ENCODE measurements at regions of chr17 and their contacts with region 1.

Region 1: GRCh38 chr17:29617125-29617480 is 5.6 kb downstream of the CORO6 start:
- DNase-seq: peak; percentile 90
- ATAC-seq: peak; percentile 71
- H3K4me3 ChIP-seq: peak overlapping the region in 4 of 5 experiments; percentile 37 to 73 (median 53)
- H3K4me3 Mint-ChIP-seq: peak overlapping the region; percentile 90
- H3K27ac ChIP-seq: no peak overlapping the region
- H3K27ac Mint-ChIP-seq: peak overlapping the region; percentile 64
- H3K4me1 ChIP-seq: peaks cover 56 to 61% of the 10 kb centered on the region in 2 donors
- H3K4me1 Mint-ChIP-seq: peaks cover 47% of the 10 kb centered on the region
- H3K27me3 ChIP-seq: peaks cover 0 to 40% (median 12%) of the 10 kb centered on the region in 4 experiments
- H3K27me3 Mint-ChIP-seq: peaks cover 5% of the 10 kb centered on the region
- CTCF ChIP-seq: peak; percentile 76

Region 2: GRCh38 chr17:29252101-29252866 is 364.8 kb before region 1 on chr17:
- CTCF ChIA-PET with region 1: no interaction called
- POLR2A ChIA-PET with region 1: no interaction called
- intact Hi-C with region 1: no loop called
- DNase-seq: peak; percentile 39
- ATAC-seq: no peak
- H3K4me3 ChIP-seq: no peak overlapping the region
- H3K4me3 Mint-ChIP-seq: no peak overlapping the region
- H3K27ac ChIP-seq: no peak overlapping the region
- H3K27ac Mint-ChIP-seq: no peak overlapping the region
- H3K4me1 ChIP-seq: peaks cover 0 to 11% of the 10 kb centered on the region in 2 donors
- H3K4me1 Mint-ChIP-seq: peaks cover 16% of the 10 kb centered on the region
- H3K27me3 ChIP-seq: no peaks in the 10 kb centered on the region
- H3K27me3 Mint-ChIP-seq: no peaks in the 10 kb centered on the region
- CTCF ChIP-seq: peak; percentile 66

Region 3: DNA sequence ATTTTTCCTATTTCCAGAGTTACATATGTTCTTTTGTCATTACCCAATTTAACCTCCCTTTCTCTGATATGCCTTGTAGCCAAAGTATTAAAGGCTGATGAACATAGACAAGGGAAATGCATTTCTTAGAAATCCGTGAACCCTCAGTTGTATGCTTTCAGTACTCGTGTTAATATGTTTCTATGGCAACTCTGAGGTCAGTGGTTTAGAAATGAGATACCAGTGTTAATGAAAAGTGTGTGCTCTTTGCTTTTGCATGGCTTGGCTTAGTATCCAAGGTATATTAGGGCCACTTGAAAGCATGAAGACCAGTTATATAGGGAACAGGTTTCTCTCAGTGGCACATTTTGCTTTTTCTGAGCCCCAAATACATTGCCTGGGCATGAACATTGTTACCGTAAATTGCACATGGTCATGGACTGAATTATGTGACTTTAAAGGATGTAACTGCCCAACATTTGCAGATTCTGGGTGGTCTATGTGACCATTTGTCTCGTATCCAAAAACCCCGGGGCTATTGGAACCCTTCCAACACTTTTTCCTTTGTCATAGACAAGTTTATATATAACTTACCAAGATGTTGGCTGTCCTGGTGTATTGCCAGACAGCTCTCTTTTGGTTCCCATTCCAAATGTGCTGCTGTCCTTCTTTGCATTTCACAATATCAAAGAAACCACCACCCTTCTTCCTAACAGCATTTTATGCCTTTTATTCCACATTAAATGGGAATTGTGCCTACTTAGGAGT is 67.8 kb before region 1 on chr17:
- CTCF ChIA-PET with region 1: no interaction called
- POLR2A ChIA-PET with region 1: no interaction called
- intact Hi-C with region 1: no loop called
- DNase-seq: no peak
- ATAC-seq: no peak
- H3K4me3 ChIP-seq: no peak overlapping the region
- H3K4me3 Mint-ChIP-seq: no peak overlapping the region
- H3K27ac ChIP-seq: no peak overlapping the region
- H3K27ac Mint-ChIP-seq: no peak overlapping the region
- H3K4me1 ChIP-seq: no peaks in the 10 kb centered on the region
- H3K4me1 Mint-ChIP-seq: no peaks in the 10 kb centered on the region
- H3K27me3 ChIP-seq: no peaks in the 10 kb centered on the region
- H3K27me3 Mint-ChIP-seq: no peaks in the 10 kb centered on the region
- CTCF ChIP-seq: no peak

Region 4: DNA sequence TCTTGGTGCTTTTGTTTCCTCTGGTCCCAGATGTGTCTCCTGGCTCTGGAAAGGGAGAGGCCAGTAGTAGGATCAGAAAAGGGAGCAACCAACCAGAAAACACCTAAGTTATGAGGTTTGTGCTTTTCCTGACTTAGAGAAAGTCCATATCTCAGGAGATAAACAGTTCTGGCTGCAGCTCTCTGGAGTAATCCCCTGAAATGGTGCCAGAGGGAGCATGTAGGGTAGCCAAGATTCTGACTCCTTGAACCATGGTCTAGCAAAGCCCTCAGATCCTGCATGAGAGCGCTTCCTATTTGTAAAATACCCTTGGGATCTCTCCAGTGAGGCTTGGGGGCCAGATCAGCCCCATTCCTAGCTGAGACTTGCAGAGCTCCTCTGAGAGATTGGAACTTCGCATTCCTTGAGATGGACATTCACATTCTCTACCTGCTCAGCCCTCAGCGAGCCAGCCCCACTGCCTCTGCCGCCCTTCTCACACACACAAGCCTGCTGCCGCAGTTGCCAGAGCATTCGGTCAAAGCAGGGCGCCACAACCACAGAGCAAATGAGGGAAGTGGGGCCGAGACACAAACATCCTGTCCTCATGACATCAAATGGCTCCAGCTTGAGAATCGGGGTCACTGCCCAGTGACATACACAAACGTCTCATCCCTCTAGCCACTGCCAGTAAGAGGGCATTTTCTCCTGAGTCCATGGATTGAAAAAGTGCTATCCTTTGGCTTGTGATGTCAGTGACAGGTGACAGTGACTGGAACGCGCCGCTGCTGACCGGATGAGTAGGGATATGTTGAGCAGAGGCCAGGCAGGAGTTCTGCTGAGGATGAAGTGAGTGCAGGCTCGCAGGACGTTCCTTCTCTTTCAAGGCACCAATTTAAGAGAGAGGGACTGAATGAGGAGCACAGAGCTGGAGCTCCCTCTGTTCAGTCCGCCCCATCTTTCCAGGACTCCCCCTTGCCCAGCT is 55.3 kb before region 1 on chr17:
- CTCF ChIA-PET with region 1: interaction called, 336 read pairs
- POLR2A ChIA-PET with region 1: interaction called, 3 read pairs
- intact Hi-C with region 1: no loop called
- DNase-seq: peak; percentile 71
- ATAC-seq: peak; percentile 36
- H3K4me3 ChIP-seq: peak overlapping the region in 1 of 5 experiments; percentile 47
- H3K4me3 Mint-ChIP-seq: peak overlapping the region; percentile 87
- H3K27ac ChIP-seq: peak overlapping the region; percentile 60 to 74
- H3K27ac Mint-ChIP-seq: peak overlapping the region; percentile 97
- H3K4me1 ChIP-seq: peaks cover 82 to 93% of the 10 kb centered on the region in 2 donors
- H3K4me1 Mint-ChIP-seq: peaks cover 77% of the 10 kb centered on the region
- H3K27me3 ChIP-seq: no peaks in the 10 kb centered on the region
- H3K27me3 Mint-ChIP-seq: no peaks in the 10 kb centered on the region
- CTCF ChIP-seq: no peak

Region 5: GRCh38 chr17:29579866-29580771 is 37.0 kb before region 1 on chr17:
- CTCF ChIA-PET with region 1: interaction called, 336 read pairs
- POLR2A ChIA-PET with region 1: interaction called, 9 read pairs
- intact Hi-C with region 1: loop called (anchors 1 kb)
- DNase-seq: peak; percentile 93
- ATAC-seq: peak; percentile 96
- H3K4me3 ChIP-seq: no peak overlapping the region
- H3K4me3 Mint-ChIP-seq: no peak overlapping the region
- H3K27ac ChIP-seq: no peak overlapping the region
- H3K27ac Mint-ChIP-seq: peak overlapping the region; percentile 87
- H3K4me1 ChIP-seq: peaks cover 19 to 23% of the 10 kb centered on the region in 2 donors
- H3K4me1 Mint-ChIP-seq: peaks cover 27% of the 10 kb centered on the region
- H3K27me3 ChIP-seq: no peaks in the 10 kb centered on the region
- H3K27me3 Mint-ChIP-seq: no peaks in the 10 kb centered on the region
- CTCF ChIP-seq: peak; percentile 79

Region 6: GRCh38 chr17:29628644-29629043 is 11.5 kb after region 1 on chr17:
- CTCF ChIA-PET with region 1: interaction called, 16 read pairs
- POLR2A ChIA-PET with region 1: no interaction called
- intact Hi-C with region 1: no loop called
- DNase-seq: no peak
- ATAC-seq: no peak
- H3K4me3 ChIP-seq: no peak overlapping the region
- H3K4me3 Mint-ChIP-seq: no peak overlapping the region
- H3K27ac ChIP-seq: no peak overlapping the region
- H3K27ac Mint-ChIP-seq: peak overlapping the region; percentile 28
- H3K4me1 ChIP-seq: no peaks in the 10 kb centered on the region
- H3K4me1 Mint-ChIP-seq: peaks cover 19% of the 10 kb centered on the region
- H3K27me3 ChIP-seq: no peaks in the 10 kb centered on the region
- H3K27me3 Mint-ChIP-seq: no peaks in the 10 kb centered on the region
- CTCF ChIP-seq: no peak

Region 7: DNA sequence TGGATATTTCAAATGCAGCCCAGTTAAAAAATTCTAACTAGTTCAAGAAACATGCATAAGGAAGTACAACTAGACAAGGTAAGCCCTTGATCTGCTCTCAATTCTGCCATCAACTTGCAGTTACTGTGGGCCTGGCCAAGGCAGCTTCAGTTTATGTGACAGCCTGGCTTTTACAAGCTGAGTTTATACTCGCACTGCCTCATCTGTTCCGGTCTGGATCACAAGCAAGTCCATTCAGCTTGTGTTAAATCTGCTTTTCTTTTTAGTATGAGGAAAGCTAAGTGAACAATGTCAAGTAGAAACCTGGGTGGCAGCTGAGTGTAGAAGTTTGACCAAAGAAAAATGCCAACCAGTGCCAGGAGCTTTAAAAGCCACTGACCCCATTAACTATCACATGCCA is 82.2 kb after region 1 on chr17:
- CTCF ChIA-PET with region 1: interaction called, 10 read pairs
- POLR2A ChIA-PET with region 1: no interaction called
- intact Hi-C with region 1: no loop called
- DNase-seq: no peak
- ATAC-seq: no peak
- H3K4me3 ChIP-seq: no peak overlapping the region
- H3K4me3 Mint-ChIP-seq: no peak overlapping the region
- H3K27ac ChIP-seq: peak overlapping the region in 1 of 2 donors; percentile 60
- H3K27ac Mint-ChIP-seq: peak overlapping the region; percentile 75
- H3K4me1 ChIP-seq: peaks cover 20% of the 10 kb centered on the region in 2 donors
- H3K4me1 Mint-ChIP-seq: peaks cover 34% of the 10 kb centered on the region
- H3K27me3 ChIP-seq: no peaks in the 10 kb centered on the region
- H3K27me3 Mint-ChIP-seq: no peaks in the 10 kb centered on the region
- CTCF ChIP-seq: no peak

Measured in B cell (primary cell).